AG04450 (cell line): ENCODE measurements at regions of chr1 and their contacts with region 1.

Region 1: DNA sequence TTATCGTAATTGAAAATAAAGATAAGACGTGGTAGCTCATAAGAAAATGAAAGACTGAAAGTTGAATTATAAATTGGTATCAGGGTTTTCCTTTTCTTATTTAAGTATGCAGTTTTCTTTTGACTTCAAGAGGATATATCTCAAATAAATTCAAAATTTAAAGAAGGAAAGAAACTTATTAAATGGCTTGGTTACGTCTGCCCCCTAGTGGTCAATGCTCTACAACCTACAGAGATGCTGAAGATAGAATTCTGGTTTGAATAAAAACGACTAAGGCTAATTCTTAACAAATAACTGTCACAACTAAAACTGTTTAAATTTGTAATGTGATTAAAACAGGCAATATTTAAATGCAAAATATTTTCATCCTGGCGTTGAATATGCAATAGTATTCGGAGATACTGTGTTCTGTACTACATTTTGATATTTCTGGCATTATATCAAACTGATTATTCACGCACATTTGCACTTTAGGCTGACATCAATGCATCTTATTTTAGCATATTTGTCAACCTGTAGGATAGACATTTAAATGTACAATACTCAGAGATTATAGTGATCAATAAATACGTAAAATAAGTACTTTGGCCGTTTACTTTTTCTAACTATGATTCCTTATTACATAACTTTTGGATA is 26.8 kb downstream of the IFI44 start:
- DNase-seq: peak; percentile 41
- H3K4me3 ChIP-seq: no peak overlapping the region
- H3K27ac ChIP-seq: no peak overlapping the region
- H3K27me3 ChIP-seq: no peaks in the 10 kb centered on the region
- CTCF ChIP-seq: peak; percentile 85

Region 2: DNA sequence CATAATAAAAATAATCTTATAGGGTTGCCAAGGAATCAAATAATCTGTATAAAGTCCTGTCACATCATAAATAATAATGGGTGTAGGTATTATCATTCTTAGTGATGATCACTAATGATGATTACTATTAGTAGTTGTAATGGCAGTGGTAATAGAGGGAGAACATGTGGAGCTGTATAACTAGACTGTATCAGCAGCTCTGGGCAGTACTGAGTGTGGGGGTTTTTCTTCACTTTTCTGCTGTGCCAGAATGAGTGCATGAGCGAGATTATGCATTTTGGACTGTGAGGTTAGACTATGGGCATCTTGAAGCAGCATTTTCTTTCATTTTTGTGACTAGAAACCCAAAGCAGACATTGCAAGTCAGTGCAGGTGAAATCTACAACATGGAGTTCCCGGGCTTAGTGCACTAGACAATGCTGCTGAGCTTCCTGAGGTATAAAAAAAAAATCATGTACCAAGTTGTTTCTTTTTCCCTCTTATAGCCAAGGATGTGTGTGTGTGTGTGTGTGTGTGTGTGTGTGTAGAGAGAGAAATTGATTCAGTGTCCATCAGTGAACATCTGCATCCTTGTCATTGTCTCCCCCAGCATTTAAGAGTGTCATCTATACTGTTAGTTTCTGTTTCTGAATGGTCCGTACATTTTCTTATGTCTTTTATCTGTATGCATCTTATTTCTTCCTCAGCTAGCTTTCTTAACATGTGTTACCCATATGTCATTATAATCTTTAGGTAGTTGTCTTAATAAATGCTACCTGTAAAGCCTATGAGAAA is 544.1 kb before region 1 on chr1:
- CTCF ChIA-PET with region 1: interaction called, 27 read pairs
- POLR2A ChIA-PET with region 1: no interaction called
- DNase-seq: no peak
- H3K4me3 ChIP-seq: no peak overlapping the region
- H3K27ac ChIP-seq: no peak overlapping the region
- H3K27me3 ChIP-seq: no peaks in the 10 kb centered on the region
- CTCF ChIP-seq: no peak

Region 3: GRCh38 chr1:78501203-78501602 is 175.3 kb before region 1 on chr1:
- CTCF ChIA-PET with region 1: no interaction called
- POLR2A ChIA-PET with region 1: no interaction called
- DNase-seq: no peak
- H3K4me3 ChIP-seq: no peak overlapping the region
- H3K27ac ChIP-seq: no peak overlapping the region
- H3K27me3 ChIP-seq: no peaks in the 10 kb centered on the region
- CTCF ChIP-seq: no peak

Region 4: DNA sequence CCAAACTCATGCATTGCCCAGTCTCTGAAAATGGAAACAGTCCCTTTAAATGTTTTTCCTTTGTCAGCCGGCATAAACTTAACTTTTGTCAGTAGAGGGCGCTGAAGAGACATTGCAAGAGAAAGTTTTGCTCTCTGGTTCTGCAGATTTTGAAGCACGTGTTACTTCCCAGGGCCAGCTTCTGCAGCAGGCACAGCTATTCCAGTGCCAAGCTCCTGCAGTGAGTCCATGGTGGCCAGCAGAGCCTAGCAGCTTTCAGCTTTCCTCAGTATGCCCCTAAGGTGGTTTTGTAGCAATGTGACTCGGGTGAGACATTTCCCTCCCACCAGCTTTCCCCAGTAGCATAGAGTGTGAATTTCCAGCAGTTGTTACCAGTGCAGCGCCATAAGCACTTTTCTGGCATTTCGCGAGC is 58.8 kb before region 1 on chr1:
- CTCF ChIA-PET with region 1: interaction called, 31 read pairs
- POLR2A ChIA-PET with region 1: no interaction called
- DNase-seq: peak; percentile 66
- H3K4me3 ChIP-seq: no peak overlapping the region
- H3K27ac ChIP-seq: no peak overlapping the region
- H3K27me3 ChIP-seq: no peaks in the 10 kb centered on the region
- CTCF ChIP-seq: peak; percentile 90

Region 5: DNA sequence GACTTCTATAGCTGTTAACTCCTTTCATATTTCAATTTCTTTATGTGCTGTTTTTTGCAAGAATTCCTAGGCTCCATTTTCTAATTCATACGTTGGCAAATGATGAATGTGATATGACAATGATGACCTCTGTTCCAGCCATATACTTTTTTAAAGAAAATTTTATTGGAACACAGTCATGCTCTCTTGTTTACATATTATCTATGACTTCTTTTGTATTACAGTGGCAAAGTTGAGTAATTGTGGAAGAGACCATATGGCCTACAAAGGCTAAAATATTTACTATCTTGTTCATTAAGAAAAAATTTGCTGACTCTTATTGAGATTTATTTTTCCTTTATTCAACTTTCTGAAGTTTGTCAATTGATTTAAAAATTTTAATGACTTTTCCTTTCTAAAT is 49.1 kb before region 1 on chr1:
- CTCF ChIA-PET with region 1: interaction called, 11 read pairs
- POLR2A ChIA-PET with region 1: no interaction called
- DNase-seq: no peak
- H3K4me3 ChIP-seq: no peak overlapping the region
- H3K27ac ChIP-seq: no peak overlapping the region
- H3K27me3 ChIP-seq: no peaks in the 10 kb centered on the region
- CTCF ChIP-seq: no peak

Region 6: DNA sequence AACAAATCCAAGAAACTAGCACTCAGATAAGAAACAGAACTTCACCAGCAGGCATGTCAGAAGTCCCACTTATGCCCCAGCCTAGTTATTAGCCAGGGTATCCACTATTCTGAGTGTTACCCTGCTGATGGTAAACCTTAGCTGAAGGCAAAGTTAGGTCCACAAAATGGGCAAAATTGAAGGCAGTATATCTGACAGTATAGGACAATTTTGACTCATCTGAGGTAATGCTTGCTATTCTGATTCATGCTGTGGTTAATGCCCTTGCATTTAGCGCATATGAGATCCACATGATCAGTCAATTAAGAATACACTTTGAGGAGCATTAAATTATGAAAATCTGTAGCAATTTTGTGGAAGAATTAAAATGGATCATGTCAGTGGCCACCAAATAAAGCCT is 11.7 kb before region 1 on chr1:
- CTCF ChIA-PET with region 1: interaction called, 20 read pairs
- POLR2A ChIA-PET with region 1: no interaction called
- DNase-seq: no peak
- H3K4me3 ChIP-seq: no peak overlapping the region
- H3K27ac ChIP-seq: no peak overlapping the region
- H3K27me3 ChIP-seq: no peaks in the 10 kb centered on the region
- CTCF ChIP-seq: no peak

Region 7: DNA sequence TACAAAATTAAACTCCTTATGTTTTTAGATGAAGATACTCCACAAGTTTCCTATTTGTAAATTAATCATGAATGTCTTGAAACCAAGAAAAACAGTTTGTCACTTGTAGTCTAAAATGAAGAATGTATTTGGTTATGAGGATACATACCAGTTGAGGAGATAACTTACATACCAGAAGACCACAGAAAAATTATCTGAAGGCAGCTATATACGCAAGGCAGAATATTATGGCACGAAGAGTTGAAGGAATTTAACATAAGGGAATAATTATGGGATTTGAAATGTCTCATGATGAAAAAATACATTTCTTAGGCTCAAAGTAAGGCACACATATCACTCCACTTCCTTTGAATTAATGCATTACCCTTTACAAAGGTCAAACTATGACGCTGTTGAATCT is 46.5 kb after region 1 on chr1:
- CTCF ChIA-PET with region 1: no interaction called
- POLR2A ChIA-PET with region 1: no interaction called
- DNase-seq: no peak
- H3K4me3 ChIP-seq: no peak overlapping the region
- H3K27ac ChIP-seq: no peak overlapping the region
- H3K27me3 ChIP-seq: no peaks in the 10 kb centered on the region
- CTCF ChIP-seq: no peak